ENCODE measurements at regions of chr10 and their contacts with region 1.

Region 1: GRCh38 chr10:63157845-63158624 is 24.9 kb downstream of the NRBF2 start:
- DNase-seq: peak; percentile 41
- H3K4me3 Mint-ChIP-seq: no peak overlapping the region
- H3K27ac Mint-ChIP-seq: no peak overlapping the region
- H3K4me1 Mint-ChIP-seq: peaks cover 7% of the 10 kb centered on the region
- H3K27me3 Mint-ChIP-seq: no peaks in the 10 kb centered on the region

Region 2: GRCh38 chr10:62554632-62555199 is 603.3 kb before region 1 on chr10:
- CTCF ChIA-PET with region 1: interaction called, 4 read pairs
- POLR2A ChIA-PET with region 1: no interaction called
- intact Hi-C with region 1: loop called (anchors 1 kb)
- DNase-seq: peak; percentile 15
- H3K4me3 Mint-ChIP-seq: no peak overlapping the region
- H3K27ac Mint-ChIP-seq: no peak overlapping the region
- H3K4me1 Mint-ChIP-seq: no peaks in the 10 kb centered on the region
- H3K27me3 Mint-ChIP-seq: peaks cover 2% of the 10 kb centered on the region

Region 3: DNA sequence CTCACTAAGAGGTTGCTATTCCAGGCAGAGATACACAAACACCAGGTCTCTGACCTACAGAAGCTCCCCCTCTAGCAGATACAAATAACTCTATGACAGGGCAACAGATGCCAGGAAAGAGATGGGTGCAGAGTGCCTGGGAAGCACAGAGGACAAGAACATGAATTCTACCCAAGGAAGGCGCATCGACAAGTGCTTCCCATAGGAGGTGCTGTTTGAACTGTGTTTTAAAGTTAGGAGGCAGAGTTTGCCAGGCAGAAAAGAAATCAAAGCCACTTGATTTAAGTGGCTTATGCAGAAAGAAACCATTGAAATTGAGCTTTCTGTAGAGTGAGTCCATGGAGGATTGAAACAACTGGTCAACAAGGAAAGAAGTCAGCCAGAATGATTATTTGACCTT is 306.6 kb before region 1 on chr10:
- CTCF ChIA-PET with region 1: interaction called, 10 read pairs
- POLR2A ChIA-PET with region 1: no interaction called
- intact Hi-C with region 1: loop called (anchors 1 kb)
- DNase-seq: peak; percentile 55
- H3K4me3 Mint-ChIP-seq: no peak overlapping the region
- H3K27ac Mint-ChIP-seq: no peak overlapping the region
- H3K4me1 Mint-ChIP-seq: peaks cover 46% of the 10 kb centered on the region
- H3K27me3 Mint-ChIP-seq: peaks cover 8% of the 10 kb centered on the region

Region 4: GRCh38 chr10:63103971-63104409 is 54.0 kb before region 1 on chr10:
- CTCF ChIA-PET with region 1: interaction called, 3 read pairs
- POLR2A ChIA-PET with region 1: no interaction called
- intact Hi-C with region 1: loop called (anchors 5 kb)
- DNase-seq: peak; percentile 80
- H3K4me3 Mint-ChIP-seq: no peak overlapping the region
- H3K27ac Mint-ChIP-seq: no peak overlapping the region
- H3K4me1 Mint-ChIP-seq: peaks cover 13% of the 10 kb centered on the region
- H3K27me3 Mint-ChIP-seq: peaks cover 19% of the 10 kb centered on the region

Measured in activated CD4-positive, alpha-beta memory T cell treated with anti-CD3 and anti-CD28 coated beads for 36 hours (primary cell).